HepG2 (cell line): ENCODE measurements at regions of chr4 and their contacts with region 1.

Region 1: DNA sequence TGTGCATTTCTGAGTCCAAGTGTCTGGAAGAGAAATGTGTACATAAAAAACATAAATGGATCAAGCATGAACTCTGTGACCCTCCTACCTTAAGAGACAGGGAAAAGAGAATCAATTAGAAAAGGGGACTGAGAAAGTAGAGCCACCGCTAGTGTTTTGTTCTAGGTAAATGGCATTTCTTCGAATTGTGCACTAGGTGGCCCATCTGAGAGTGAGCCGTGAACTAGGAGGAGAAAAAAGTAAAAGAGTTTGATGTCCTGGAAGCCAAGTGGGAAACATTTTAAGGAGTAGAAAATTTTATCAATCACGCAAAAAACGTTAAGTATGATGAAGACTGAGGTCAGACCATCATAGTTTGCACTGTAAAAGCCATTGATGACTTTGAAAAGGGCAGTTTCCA is 55.1 kb downstream of the NAF1 start:
- DNase-seq: no peak
- ATAC-seq: peak; percentile 67
- H3K4me3 ChIP-seq: no peak overlapping the region
- H3K27ac ChIP-seq: no peak overlapping the region
- H3K4me1 ChIP-seq: no peaks in the 10 kb centered on the region
- H3K27me3 ChIP-seq: no peaks in the 10 kb centered on the region
- CTCF ChIP-seq: no peak
- EP300 ChIP-seq: no peak
- POLR2A ChIP-seq: no peak
- RAD21 ChIP-seq: no peak

Region 2: DNA sequence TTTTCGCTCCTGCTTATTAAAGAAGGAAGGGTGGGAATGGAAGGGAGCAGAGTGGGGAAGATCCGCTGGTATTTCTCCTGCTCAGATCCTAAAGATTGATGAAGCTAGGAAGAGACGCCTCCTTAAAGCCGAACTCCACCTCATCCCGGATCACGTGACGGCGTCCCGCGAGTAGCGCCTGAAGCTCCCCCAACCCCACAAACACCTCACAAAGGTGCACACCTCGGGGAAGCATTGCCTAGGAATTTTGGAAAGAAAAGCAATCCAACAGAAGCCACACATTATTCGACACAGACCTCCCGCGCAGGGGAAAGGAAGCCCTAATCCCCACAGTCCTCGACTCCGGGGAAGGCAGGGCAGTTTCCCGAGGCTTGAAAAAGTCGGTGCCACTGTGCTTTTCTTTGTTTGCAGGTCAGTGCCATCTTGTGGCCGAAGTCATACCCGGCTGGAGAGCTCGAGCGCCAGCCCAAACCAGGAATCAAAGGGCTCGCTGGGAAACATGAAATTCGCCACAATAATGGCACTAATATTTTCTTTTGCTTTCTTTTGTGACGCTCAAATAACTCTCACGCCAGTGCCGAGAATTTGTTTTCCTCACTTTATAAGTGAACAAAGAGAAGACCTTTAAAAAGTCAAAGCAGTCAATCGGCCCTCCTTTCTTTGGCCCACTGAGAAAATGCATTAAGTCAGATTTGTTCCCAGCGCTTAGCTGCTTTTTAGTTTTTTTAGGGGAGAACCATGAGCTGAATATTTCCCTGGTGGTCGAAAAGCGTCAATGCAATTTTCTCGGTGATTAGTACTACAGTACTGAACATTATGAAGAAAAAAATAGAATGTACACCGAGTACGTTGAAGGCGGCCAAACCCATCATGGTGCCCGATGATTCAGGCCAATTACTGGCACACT is 221.2 kb after region 1 on chr4 and contains the start of gene NPY1R:
- CTCF ChIA-PET with region 1: no interaction called
- POLR2A ChIA-PET with region 1: no interaction called
- in situ Hi-C with region 1: no loop called
- intact Hi-C with region 1: loop called (anchors 5 kb)
- DNase-seq: peak; percentile 24
- ATAC-seq: peak; percentile 95
- H3K4me3 ChIP-seq: peak within 1 kb of the TSS in 2 of 3 experiments; percentile 21 to 52; a peak in 3 of 6 replicates
- H3K27ac ChIP-seq: no peak within 1 kb of the TSS
- H3K4me1 ChIP-seq: no peaks in the 10 kb centered on the region
- H3K27me3 ChIP-seq: no peaks in the 10 kb centered on the region
- CTCF ChIP-seq: peak; percentile 71
- EP300 ChIP-seq: no peak
- POLR2A ChIP-seq: no peak
- RAD21 ChIP-seq: peak; percentile 34; the same call in 1 of the 2 replicates
- total RNA-seq, gene NPY1R: not detected in 2 replicates